ENCODE measurements at regions of chr19 and their contacts with region 1.

Region 1: GRCh38 chr19:49363268-49364082 is at the start of gene DKKL1:
- DNase-seq: peak; percentile 96 to 99
- H3K4me3 ChIP-seq: peak within 1 kb of the TSS; percentile 64
- H3K4me3 Mint-ChIP-seq: no peak within 1 kb of the TSS
- H3K27ac Mint-ChIP-seq: no peak within 1 kb of the TSS
- H3K4me1 ChIP-seq: peaks cover 8% of the 10 kb centered on the region; the same call in 1 of the 2 replicates
- H3K4me1 Mint-ChIP-seq: peaks cover 11% of the 10 kb centered on the region
- H3K27me3 ChIP-seq: no peaks in the 10 kb centered on the region; the same call in 1 of the 2 replicates
- H3K27me3 Mint-ChIP-seq: no peaks in the 10 kb centered on the region
- CTCF ChIP-seq: peak in 1 of 2 experiments; percentile 11
- total RNA-seq, gene DKKL1: not detected in 2 replicates

Region 2: DNA sequence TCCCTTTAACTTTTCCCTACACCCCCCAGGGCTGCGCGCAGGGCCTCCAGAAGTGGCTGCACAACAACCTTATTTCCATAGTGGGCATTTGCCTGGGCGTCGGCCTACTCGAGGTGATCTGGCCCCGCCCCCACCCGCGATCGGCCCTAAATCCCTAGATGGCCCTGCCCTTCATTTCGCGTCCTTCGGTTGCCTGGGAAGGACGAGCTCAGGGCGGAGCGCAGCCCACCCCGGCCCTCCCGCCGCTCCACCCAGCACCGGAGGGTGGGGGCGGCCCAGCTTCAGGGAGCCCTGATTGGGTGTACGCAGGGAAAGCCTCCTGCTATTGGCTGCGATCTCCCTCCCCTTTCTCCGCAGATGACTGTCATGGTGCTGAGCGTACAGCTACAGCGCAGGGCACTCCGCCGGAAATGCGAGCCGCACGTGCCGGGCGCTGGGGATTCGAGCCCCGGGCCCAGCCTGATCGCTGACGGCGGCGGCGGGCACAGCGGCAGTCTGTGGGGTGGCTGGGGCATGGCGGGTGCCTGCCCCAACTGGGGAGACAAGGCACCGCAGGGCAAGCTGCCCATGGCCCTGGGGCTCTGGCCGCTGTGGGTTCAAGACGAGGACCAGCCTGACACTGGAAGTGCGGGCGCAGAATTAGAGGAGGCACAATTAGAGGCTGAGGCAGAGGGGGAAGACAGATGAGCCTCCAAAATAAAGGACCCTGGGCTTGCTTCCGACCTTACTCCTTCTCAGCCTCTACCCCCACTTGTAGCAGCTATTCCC is 24.0 kb before region 1 on chr19:
- CTCF ChIA-PET with region 1: no interaction called
- POLR2A ChIA-PET with region 1: no interaction called
- intact Hi-C with region 1: loop called (anchors 1 kb)
- DNase-seq: peak; percentile 93 to 95
- H3K4me3 ChIP-seq: peak overlapping the region; percentile 34
- H3K4me3 Mint-ChIP-seq: peak overlapping the region; percentile 77
- H3K27ac Mint-ChIP-seq: peak overlapping the region; percentile 56
- H3K4me1 ChIP-seq: peaks cover 10% of the 10 kb centered on the region
- H3K4me1 Mint-ChIP-seq: peaks cover 16% of the 10 kb centered on the region
- H3K27me3 ChIP-seq: no peaks in the 10 kb centered on the region
- H3K27me3 Mint-ChIP-seq: no peaks in the 10 kb centered on the region
- CTCF ChIP-seq: no peak

Region 3: GRCh38 chr19:49443366-49444099 is 80.1 kb after region 1 on chr19:
- CTCF ChIA-PET with region 1: interaction called, 7 read pairs
- POLR2A ChIA-PET with region 1: no interaction called
- intact Hi-C with region 1: loop called (anchors 1 kb)
- DNase-seq: peak; percentile 95 to 96
- H3K4me3 ChIP-seq: peak overlapping the region; percentile 65
- H3K4me3 Mint-ChIP-seq: peak overlapping the region; percentile 79
- H3K27ac Mint-ChIP-seq: peak overlapping the region; percentile 46
- H3K4me1 ChIP-seq: 0 out of 2 replicates have a peak, but pooled peaks cover 3% of the 10 kb centered on the region
- H3K4me1 Mint-ChIP-seq: peaks cover 23% of the 10 kb centered on the region
- H3K27me3 ChIP-seq: peaks cover 6% of the 10 kb centered on the region
- H3K27me3 Mint-ChIP-seq: peaks cover 29% of the 10 kb centered on the region
- CTCF ChIP-seq: peak; percentile 86 to 94

Measured in Caco-2 (cell line).